CD4-positive, alpha-beta memory T cell (primary cell): ENCODE measurements at regions of chr1 and their contacts with region 1.

Region 1: GRCh38 chr1:205523891-205524793 is 19.7 kb downstream of the CDK18 start:
- DNase-seq: peak in 4 of 5 donors; percentile 61 to 64 (median 63)
- H3K4me3 ChIP-seq: no peak overlapping the region
- H3K4me3 Mint-ChIP-seq: no peak overlapping the region
- H3K27ac ChIP-seq: no peak overlapping the region
- H3K27ac Mint-ChIP-seq: no peak overlapping the region
- H3K4me1 ChIP-seq: no peaks in the 10 kb centered on the region
- H3K4me1 Mint-ChIP-seq: no peaks in the 10 kb centered on the region
- H3K27me3 ChIP-seq: no peaks in the 10 kb centered on the region
- H3K27me3 Mint-ChIP-seq: peaks cover 0 to 3% of the 10 kb centered on the region in 2 donors

Region 2: GRCh38 chr1:205335643-205336091 is 188.5 kb before region 1 on chr1:
- CTCF ChIA-PET with region 1: interaction called, 126 read pairs
- POLR2A ChIA-PET with region 1: no interaction called
- intact Hi-C with region 1: loop called (anchors 1 kb)
- DNase-seq: peak; percentile 68 to 72 (median 70)
- H3K4me3 ChIP-seq: no peak overlapping the region
- H3K4me3 Mint-ChIP-seq: no peak overlapping the region
- H3K27ac ChIP-seq: no peak overlapping the region
- H3K27ac Mint-ChIP-seq: no peak overlapping the region
- H3K4me1 ChIP-seq: no peaks in the 10 kb centered on the region
- H3K4me1 Mint-ChIP-seq: peaks cover 0 to 2% (median 0%) of the 10 kb centered on the region in 4 donors
- H3K27me3 ChIP-seq: no peaks in the 10 kb centered on the region
- H3K27me3 Mint-ChIP-seq: peaks cover 0 to 2% of the 10 kb centered on the region in 2 donors

Region 3: GRCh38 chr1:205391386-205391785 is 132.8 kb before region 1 on chr1:
- CTCF ChIA-PET with region 1: interaction called, 52 read pairs
- POLR2A ChIA-PET with region 1: no interaction called
- intact Hi-C with region 1: no loop called
- DNase-seq: no peak
- H3K4me3 ChIP-seq: no peak overlapping the region
- H3K4me3 Mint-ChIP-seq: no peak overlapping the region
- H3K27ac ChIP-seq: no peak overlapping the region
- H3K27ac Mint-ChIP-seq: no peak overlapping the region
- H3K4me1 ChIP-seq: no peaks in the 10 kb centered on the region
- H3K4me1 Mint-ChIP-seq: no peaks in the 10 kb centered on the region
- H3K27me3 ChIP-seq: peaks cover 6% of the 10 kb centered on the region
- H3K27me3 Mint-ChIP-seq: peaks cover 6 to 19% of the 10 kb centered on the region in 2 donors

Region 4: DNA sequence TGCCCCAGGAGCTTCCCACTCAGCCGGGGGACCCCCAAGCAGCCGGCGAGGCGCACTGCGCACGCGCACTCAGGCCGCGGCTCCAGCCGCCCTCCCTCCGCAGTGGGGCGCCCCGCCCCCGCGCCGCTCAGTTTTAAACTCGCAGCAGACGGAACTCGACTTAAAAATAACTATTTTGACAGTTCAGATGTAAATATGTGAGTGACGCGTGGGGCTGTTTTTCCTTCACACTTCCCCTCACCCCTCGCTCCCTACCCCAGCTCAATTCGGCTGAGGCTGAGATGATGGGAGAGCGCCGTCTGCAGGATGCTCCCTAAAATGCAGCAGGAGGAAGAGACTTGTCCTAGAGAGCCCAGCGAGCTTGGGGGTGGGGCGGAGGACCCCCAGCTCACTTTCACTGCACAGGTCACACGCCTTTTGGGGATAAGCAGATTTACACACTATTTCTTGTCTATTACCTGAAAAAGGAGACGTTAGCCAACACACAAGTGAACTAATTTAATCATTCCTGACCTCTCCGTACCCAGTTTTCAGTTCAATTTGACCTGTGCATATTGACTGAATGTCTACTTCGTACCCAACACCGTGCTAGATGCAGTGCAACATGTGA is 93.3 kb before region 1 on chr1:
- CTCF ChIA-PET with region 1: interaction called, 15 read pairs
- POLR2A ChIA-PET with region 1: no interaction called
- intact Hi-C with region 1: no loop called
- DNase-seq: peak; percentile 46 to 69 (median 53)
- H3K4me3 ChIP-seq: peak overlapping the region; percentile 41 to 55
- H3K4me3 Mint-ChIP-seq: peak overlapping the region; percentile 81 to 91 (median 84)
- H3K27ac ChIP-seq: no peak overlapping the region
- H3K27ac Mint-ChIP-seq: peak overlapping the region in 5 of 7 donors; percentile 34 to 83 (median 59)
- H3K4me1 ChIP-seq: peaks cover 10% of the 10 kb centered on the region
- H3K4me1 Mint-ChIP-seq: peaks cover 8 to 17% (median 13%) of the 10 kb centered on the region in 4 donors
- H3K27me3 ChIP-seq: no peaks in the 10 kb centered on the region
- H3K27me3 Mint-ChIP-seq: peaks cover 10 to 11% of the 10 kb centered on the region in 2 donors

Region 5: GRCh38 chr1:205563867-205564441 is 39.8 kb after region 1 on chr1:
- CTCF ChIA-PET with region 1: no interaction called
- POLR2A ChIA-PET with region 1: no interaction called
- intact Hi-C with region 1: no loop called
- DNase-seq: no peak
- H3K4me3 ChIP-seq: no peak overlapping the region
- H3K4me3 Mint-ChIP-seq: peak overlapping the region in 1 of 8 donors; percentile 58
- H3K27ac ChIP-seq: no peak overlapping the region
- H3K27ac Mint-ChIP-seq: peak overlapping the region in 1 of 7 donors; percentile 14
- H3K4me1 ChIP-seq: no peaks in the 10 kb centered on the region
- H3K4me1 Mint-ChIP-seq: peaks cover 3 to 5% (median 4%) of the 10 kb centered on the region in 4 donors
- H3K27me3 ChIP-seq: peaks cover 24% of the 10 kb centered on the region
- H3K27me3 Mint-ChIP-seq: peaks cover 25 to 32% of the 10 kb centered on the region in 2 donors

Region 6: GRCh38 chr1:205591522-205592351 is 67.6 kb after region 1 on chr1:
- CTCF ChIA-PET with region 1: interaction called, 24 read pairs
- POLR2A ChIA-PET with region 1: no interaction called
- intact Hi-C with region 1: no loop called
- DNase-seq: peak; percentile 85 to 89 (median 86)
- H3K4me3 ChIP-seq: peak overlapping the region in 1 of 2 donors; percentile 61
- H3K4me3 Mint-ChIP-seq: peak overlapping the region; percentile 87 to 93 (median 90)
- H3K27ac ChIP-seq: peak overlapping the region; percentile 52
- H3K27ac Mint-ChIP-seq: peak overlapping the region; percentile 82 to 96 (median 89)
- H3K4me1 ChIP-seq: peaks cover 21% of the 10 kb centered on the region
- H3K4me1 Mint-ChIP-seq: peaks cover 17 to 34% (median 25%) of the 10 kb centered on the region in 4 donors
- H3K27me3 ChIP-seq: no peaks in the 10 kb centered on the region
- H3K27me3 Mint-ChIP-seq: no peaks in the 10 kb centered on the region